ENCODE measurements at regions of chr5 and their contacts with region 1.

Region 1: GRCh38 chr5:149551200-149552037 is at the start of gene CSNK1A1:
- DNase-seq: peak; percentile 99
- H3K4me3 Mint-ChIP-seq: peak within 1 kb of the TSS; percentile 94
- H3K27ac Mint-ChIP-seq: peak within 1 kb of the TSS; percentile 92
- H3K4me1 Mint-ChIP-seq: peaks cover 21% of the 10 kb centered on the region
- H3K27me3 Mint-ChIP-seq: no peaks in the 10 kb centered on the region
- CTCF ChIP-seq: peak; percentile 94
- total RNA-seq, gene CSNK1A1: 350 and 377 TPM in 2 replicates

Region 2: DNA sequence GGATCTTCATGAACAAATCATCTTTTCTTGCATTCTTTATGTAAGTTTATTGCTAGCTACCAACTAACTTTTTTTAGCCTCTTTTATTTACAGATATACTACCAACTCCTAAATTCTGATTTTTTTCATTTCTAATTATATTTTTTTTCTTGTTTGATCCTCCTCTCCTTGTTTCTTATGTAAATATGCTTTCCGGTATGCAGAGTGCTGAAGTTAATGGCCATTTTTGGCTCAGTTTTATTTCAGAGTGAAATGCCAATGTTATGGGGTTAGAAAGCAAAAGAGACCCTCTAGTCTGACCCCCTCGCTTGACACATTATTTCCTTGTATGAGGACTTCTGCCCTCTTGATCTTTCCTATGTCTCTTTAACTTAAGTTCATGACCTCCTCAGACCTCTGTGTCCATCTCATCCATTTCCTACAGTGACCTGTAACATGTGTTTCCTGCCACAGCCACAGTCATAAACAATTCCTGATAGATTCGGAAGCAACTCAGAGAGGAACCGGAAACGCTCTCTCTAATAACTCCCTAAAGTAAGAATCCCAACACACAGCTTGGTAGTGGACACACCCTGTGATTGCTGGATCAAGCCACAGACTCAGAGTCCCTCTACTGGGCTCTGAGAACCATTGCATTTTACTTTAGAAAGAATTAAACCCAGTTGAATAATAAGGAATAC is 322.7 kb before region 1 on chr5:
- CTCF ChIA-PET with region 1: no interaction called
- intact Hi-C with region 1: no loop called
- DNase-seq: peak; percentile 54
- H3K4me3 Mint-ChIP-seq: peak overlapping the region; percentile 5
- H3K27ac Mint-ChIP-seq: peak overlapping the region; percentile 82
- H3K4me1 Mint-ChIP-seq: peaks cover 25% of the 10 kb centered on the region
- H3K27me3 Mint-ChIP-seq: no peaks in the 10 kb centered on the region
- CTCF ChIP-seq: peak; percentile 55

Region 3: DNA sequence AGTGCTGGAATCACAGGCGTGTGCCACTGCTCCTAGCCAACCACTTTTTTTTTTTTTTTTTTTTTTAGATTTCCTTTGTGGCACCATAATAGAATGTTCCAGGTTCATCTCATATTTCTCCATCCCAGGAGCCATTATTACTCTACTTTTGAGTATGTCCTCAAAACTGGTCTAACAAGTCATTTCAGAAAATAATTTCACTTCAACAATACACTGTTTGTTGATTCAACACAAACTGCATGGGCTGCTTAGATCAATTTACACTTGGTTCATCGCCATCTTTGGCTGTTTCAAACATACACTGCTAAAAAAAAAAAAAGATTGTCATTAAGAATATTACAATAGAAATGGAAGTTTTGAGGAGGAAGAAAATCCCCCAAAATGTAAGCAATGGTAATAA is 58.1 kb before region 1 on chr5:
- CTCF ChIA-PET with region 1: no interaction called
- intact Hi-C with region 1: loop called (anchors 2 kb)
- DNase-seq: no peak
- H3K4me3 Mint-ChIP-seq: no peak overlapping the region
- H3K27ac Mint-ChIP-seq: peak overlapping the region; percentile 72
- H3K4me1 Mint-ChIP-seq: peaks cover 43% of the 10 kb centered on the region
- H3K27me3 Mint-ChIP-seq: no peaks in the 10 kb centered on the region
- CTCF ChIP-seq: no peak

Region 4: DNA sequence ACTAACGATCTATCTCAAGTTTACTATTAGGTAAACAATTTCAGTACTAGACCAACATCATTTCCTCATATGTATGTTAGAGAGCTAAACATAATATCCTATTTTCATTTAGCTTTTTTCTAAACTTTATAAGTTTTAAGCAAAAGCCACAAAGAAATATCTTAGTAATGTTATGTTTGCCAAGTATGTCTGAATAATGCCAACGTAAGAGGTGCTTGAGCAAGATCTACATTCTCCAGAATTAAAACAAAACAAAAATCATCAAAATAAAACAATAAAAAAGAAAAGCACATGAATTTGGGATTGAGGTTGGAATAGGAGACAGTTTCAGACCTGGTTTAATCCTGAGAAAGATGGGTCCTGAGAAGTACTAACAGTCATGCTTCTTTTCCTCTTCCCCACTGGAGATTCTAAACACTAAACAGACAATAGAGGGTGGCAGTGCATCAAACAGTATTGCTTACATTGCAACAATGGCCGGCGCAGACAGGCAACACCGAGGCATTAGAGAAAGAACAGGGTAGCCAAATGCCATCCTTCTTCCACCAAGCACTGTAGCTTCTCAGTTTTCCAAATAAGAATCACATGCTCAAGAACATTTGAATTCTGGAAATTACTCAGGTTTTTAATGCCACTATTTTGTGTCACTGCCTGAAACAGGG is 33.8 kb before region 1 on chr5:
- CTCF ChIA-PET with region 1: interaction called, 12 read pairs
- intact Hi-C with region 1: loop called (anchors 5 kb)
- DNase-seq: no peak
- H3K4me3 Mint-ChIP-seq: no peak overlapping the region
- H3K27ac Mint-ChIP-seq: no peak overlapping the region
- H3K4me1 Mint-ChIP-seq: peaks cover 72% of the 10 kb centered on the region
- H3K27me3 Mint-ChIP-seq: no peaks in the 10 kb centered on the region
- CTCF ChIP-seq: no peak